HEK293T (cell line): ENCODE measurements at regions of chr9 and their contacts with region 1.

Region 1: DNA sequence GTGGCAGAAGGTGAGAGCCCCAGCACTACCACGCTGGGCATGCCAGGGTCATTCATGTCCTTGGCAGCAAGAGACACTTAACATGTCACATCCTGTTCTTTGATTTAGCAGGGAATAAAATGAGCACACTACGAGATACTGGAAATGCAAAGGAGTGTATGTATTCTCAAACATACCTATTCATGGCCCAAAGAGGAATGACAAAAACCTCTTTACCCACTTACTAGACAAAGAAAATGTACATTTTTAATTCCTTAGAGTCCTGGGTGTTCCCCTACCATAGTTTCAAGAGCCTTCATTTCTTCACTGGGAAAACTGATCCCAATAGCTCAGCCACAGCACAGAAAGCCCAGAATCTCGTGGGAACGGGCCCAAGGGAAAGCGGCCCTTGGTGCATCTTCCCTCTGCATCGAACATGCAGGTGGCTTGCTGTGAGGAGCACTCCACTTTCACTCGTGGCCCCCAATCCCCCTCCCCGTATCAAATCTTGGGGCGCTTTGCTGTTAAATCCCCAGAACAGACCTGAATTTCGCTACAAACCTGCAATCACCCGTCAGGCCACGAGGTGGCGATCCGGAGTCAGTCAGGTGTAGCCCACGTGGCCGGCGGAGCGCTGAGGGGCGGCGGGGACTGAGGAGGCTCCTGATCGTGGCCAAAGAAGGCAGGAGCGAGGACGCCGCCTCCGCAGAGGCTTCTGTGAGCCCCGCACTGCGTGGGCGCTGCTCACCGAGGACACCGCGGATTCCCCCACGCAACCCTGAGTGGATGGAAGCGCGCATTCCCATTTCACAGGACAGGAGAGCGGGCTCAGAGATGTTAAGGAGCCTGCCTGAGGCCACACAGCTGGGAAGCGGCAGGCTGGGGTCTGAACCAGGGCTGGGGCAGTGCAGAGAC is 91.4 kb downstream of the LMX1B start:
- DNase-seq: peak; percentile 85

Region 2: DNA sequence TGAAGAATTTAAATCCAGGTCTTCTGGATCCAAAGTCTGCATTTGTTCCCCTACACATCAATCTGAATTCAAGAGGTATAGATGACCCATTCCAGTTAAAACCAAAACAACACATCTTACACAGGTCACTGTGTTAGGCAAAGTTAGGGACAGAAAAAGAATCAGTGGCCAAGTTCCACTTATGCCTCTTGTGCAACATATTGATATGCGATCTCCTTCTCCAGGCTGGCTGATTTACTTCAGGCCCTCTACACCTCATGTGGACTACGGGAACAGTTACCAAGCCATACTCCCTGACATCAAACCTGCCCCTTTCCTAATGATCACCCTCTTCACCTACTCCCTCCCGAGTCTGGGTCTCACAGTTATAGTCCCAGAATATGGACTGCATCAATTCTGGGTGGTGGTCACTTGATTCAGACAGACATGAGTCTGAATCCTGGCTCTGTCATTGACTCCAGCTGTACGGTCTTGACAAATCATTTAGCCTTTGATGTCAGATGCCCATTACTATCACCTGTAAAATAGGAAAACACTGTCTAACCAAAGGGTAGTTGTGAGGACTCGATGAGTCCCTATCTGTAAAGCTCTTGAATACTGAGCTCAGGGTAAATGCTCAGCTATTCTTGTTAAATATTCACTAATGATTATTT is 1790.2 kb before region 1 on chr9:
- CTCF ChIA-PET with region 1: interaction called, 10 read pairs
- POLR2A ChIA-PET with region 1: no interaction called
- DNase-seq: no peak

Region 3: GRCh38 chr9:126307322-126308061 is 397.6 kb before region 1 on chr9:
- CTCF ChIA-PET with region 1: no interaction called
- POLR2A ChIA-PET with region 1: no interaction called
- DNase-seq: no peak

Region 4: DNA sequence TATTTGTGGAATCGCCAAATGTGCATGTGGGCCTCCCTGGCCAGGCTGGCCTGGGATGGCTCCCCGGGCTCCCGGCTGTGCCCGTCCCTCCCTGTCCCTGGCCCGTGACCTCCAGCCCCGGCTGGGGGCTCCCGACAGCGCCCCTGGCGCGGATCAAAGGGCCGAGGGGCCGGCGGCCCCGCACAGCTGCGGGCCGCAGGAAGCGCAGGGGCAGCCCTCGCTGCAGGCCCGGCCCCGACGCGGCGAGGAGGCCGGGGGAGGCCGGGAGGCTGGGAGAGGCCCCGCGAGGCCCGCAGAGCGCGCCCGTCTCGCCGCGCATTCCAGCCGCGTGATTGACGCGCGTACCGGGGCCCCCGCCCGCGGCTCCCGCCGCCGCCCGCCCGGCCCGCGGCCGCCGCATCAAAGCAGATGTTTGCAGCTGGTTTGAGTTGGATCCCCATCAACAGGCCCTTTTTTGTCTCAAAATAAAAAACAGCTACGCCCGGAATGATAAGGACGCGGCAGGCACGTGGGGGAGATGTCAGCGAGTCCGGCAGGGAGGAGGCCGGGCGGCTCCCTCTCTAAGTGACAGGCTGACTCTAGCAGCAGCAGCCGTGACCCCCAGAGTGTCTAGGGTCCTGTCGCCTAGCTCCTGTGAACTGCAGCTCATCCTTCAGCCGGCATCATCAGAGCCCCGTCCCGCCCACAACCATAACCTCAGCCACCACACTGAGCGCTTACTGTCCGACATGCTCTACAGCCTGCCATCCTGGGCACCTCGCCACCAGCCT is 22.0 kb before region 1 on chr9:
- CTCF ChIA-PET with region 1: no interaction called
- POLR2A ChIA-PET with region 1: no interaction called
- DNase-seq: no peak

Region 5: DNA sequence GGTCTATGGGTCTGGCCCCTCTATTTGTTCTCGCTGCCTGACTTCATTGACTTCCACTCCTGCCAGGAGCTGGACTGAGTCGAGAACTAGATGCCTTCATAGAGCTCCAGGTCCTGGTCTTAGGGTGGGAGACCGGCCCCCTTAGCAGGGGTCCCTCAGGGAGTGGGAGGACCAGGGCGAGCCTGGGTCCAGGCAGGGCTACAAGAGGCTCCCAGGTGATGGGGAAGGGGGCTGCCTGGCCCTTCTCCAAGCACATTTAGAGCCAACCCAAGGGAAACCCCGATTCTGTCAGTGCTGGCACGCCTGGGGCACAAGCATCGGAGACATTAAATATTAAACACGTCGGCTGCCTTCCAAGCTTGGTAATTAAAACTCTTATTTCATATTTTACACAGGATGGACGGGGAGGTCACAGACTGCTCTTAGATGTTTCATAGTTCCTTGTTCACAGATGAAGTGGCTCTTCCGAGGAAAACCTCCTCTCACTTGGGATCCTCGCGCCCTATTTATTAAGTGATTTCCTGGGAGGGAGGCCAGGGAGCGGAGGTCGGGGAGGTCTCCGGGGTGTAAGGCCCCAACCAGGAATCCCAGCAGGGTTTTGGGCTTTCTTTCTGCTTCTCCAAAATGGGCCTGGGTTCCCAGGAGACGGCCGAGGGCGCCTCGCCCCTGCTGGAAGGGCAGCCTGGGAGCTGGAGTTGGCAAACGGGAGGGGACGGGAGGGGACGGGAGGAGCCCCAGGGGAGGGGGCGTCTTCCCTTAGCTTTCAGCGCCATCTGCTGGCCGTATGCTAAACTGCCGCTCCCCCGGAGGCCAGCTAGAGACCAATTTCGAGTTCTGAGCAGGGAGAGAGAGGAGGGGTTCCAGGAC is 76.3 kb after region 1 on chr9:
- CTCF ChIA-PET with region 1: interaction called, 97 read pairs
- POLR2A ChIA-PET with region 1: interaction called, 7 read pairs
- DNase-seq: peak; percentile 91

Region 6: GRCh38 chr9:126791406-126792151 is 86.5 kb after region 1 on chr9:
- CTCF ChIA-PET with region 1: interaction called, 10 read pairs
- POLR2A ChIA-PET with region 1: no interaction called
- DNase-seq: peak; percentile 49